ENCODE measurements at regions of chr6 and their contacts with region 1.

Region 1: DNA sequence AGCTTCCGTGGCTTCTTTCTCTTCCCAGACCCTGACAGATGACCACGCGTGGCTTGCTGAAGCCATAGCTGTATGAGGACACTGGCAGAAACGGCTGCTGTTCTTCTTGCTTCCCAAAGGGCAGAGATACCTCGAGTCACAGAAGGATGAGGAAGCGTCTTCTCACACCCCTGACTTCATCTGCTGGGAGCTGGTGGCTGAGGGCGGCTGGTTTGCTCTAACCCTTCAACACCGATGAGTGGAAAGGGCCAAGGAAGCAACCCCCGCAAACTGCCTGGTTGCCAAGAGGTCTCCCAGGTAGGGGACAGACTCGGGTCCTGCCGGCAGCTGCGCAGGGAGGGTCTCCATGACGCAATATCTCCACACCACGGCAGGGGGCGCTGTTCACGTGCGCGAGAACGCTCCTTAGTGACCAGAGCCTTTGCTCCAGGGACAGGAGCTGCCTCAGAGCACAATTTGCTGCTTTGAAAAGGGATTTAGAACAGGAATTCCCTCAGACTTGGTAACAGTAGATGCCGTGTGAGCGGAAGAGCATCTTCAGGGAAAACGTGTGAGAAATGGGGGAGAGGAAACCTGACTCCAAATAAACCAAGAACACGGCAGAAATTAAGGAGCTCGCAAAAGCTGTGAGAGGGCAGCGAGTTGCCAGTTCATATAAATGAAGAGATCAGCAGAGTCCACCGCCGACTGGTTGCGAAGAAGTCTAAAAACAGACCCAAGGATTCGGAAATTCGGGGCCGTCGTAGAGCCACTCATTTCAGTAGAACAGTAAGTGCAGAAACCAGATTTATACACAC is 80.2 kb downstream of the ERMARD start:
- DNase-seq: peak; percentile 88
- H3K4me3 ChIP-seq: peak overlapping the region in 1 of 2 experiments; percentile 29; a peak in 1 of 4 replicates
- H3K27ac ChIP-seq: no peak overlapping the region
- H3K4me1 ChIP-seq: peaks cover 2 to 3% of the 10 kb centered on the region in 2 experiments; a peak in 2 of 4 replicates
- H3K27me3 ChIP-seq: no peaks in the 10 kb centered on the region; the same call in 1 of the 2 replicates
- CTCF ChIP-seq: peak; percentile 84
- EP300 ChIP-seq: no peak
- RAD21 ChIP-seq: peak; percentile 92

Region 2: GRCh38 chr6:169800668-169801395 is 30.8 kb before region 1 on chr6:
- CTCF ChIA-PET with region 1: interaction called, 14 read pairs
- POLR2A ChIA-PET with region 1: no interaction called
- DNase-seq: no peak
- H3K4me3 ChIP-seq: no peak overlapping the region
- H3K27ac ChIP-seq: no peak overlapping the region
- H3K4me1 ChIP-seq: no peaks in the 10 kb centered on the region; a peak in 1 of 4 replicates
- H3K27me3 ChIP-seq: 0 out of 2 replicates have a peak, but pooled peaks cover 6% of the 10 kb centered on the region
- CTCF ChIP-seq: no peak
- EP300 ChIP-seq: no peak
- RAD21 ChIP-seq: no peak

Region 3: DNA sequence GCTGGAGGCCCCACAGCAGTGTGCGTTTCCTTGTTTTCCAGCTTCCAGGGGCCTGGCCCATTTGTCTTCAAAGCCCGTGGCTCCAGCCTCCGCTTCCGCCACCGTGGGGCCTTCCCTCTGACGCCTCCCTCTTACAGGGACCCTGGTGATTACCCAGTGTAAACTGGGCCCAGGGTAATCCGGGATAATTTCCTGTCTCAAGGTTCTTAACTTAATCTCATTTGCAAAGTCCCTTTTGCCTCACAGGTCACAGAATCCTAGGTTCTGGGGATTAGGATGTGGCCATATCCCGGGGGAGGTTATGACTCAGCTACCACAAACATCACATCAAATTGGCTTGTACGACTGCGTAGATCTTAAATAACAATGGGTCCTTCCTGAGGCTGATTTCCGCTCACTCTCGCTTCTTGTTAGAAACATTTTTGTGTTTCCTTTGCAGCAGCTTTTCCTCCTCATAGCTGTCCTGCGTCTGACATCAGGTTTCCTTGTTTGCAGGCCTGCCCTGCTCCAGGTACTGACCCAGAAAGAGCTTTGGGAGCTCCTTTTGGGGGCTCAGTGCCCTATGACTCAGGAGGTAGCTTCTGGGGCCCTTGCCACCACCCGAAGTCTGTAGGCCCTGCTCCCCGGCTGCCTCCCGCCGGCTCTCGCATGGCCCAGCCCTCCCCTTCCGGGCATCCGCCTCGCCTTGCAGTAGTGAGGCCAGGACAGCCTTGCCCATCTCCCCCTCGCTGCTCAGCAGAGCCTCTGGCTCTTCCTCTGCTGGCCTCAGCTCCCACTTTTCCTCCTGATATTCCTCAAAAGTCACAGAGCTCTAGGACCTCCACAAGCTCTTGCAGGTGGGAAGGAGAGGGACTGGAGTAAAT is 20.2 kb after region 1 on chr6:
- CTCF ChIA-PET with region 1: interaction called, 21 read pairs
- POLR2A ChIA-PET with region 1: no interaction called
- DNase-seq: no peak
- H3K4me3 ChIP-seq: no peak overlapping the region
- H3K27ac ChIP-seq: no peak overlapping the region
- H3K4me1 ChIP-seq: no peaks in the 10 kb centered on the region
- H3K27me3 ChIP-seq: no peaks in the 10 kb centered on the region
- CTCF ChIP-seq: no peak
- EP300 ChIP-seq: no peak
- RAD21 ChIP-seq: no peak

Region 4: DNA sequence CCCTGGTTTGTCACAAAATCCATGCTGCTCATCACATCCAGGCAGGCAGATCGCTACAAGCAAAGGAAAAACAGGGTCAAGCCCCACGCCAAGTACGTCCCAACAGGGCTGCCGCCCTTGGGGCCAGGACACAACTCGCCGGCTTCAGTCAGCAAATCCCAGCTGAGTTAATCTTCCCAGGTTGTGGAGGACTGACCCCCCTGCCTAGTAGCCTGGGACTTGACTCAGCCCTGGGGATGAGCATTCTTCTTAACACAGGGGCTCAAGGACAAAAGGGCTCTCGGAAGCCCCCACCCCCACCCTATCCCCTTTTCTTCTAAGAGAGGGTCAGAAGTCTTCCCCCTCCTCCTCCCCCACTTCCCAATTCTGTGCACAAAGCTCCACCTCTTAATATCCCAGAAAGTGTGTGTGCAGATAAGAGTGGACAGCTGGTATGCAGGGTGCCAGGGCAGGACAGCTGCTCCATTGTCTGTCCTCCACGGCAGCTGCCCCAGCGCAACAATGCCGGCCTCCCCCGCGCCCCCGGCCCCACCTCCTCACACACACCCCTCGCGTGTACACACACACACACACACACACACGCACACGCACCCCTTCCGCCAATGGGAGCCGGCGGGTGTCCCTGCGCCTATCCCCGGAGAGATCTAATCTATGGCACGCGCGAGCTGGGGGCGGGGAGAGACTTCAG is 454.7 kb after region 1 on chr6:
- CTCF ChIA-PET with region 1: interaction called, 60 read pairs
- POLR2A ChIA-PET with region 1: no interaction called
- DNase-seq: peak; percentile 70
- H3K4me3 ChIP-seq: no peak overlapping the region
- H3K27ac ChIP-seq: no peak overlapping the region
- H3K4me1 ChIP-seq: peaks cover 0 to 27% of the 10 kb centered on the region in 2 experiments; a peak in 2 of 4 replicates
- H3K27me3 ChIP-seq: peaks cover 44% of the 10 kb centered on the region
- CTCF ChIP-seq: no peak
- EP300 ChIP-seq: no peak
- RAD21 ChIP-seq: no peak

Region 5: DNA sequence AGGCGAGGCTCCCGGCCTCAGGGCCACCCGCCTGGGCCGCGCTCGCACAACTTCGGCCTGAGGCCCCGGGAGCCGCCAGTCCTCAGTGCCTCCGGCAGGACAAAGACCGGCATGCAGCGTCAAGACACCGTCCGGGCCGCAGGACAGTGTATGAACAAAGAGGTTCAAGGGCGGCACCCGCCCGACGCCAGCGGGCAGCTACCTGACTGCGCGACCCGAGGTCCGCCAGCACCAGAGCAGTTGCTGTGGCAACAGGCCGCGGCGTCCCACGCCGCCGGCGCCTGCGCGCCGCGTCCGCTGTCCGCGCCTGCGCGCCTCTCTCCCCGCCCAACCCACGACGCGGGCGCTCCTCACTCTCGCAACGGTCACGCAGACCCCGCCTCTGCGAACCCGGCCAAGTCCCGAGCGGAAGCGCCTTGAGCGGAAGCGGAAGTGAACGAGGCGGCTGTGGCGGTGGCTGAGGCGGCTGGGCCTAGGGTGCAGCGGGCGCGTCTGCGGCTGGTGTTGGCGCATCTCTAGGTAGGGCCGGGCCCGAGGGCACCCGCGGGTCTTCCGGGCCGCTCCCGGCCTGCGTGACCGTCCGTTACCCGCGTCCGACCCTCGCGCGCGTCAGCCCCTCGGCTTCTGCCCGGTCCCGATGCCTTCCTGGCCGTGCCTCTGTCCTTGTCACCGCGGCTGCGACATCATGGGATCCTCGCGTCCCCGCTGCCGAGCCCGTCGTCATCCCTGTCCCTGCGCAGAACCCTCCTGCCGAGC is 474.9 kb after region 1 on chr6 and contains the start of gene FAM120B:
- CTCF ChIA-PET with region 1: interaction called, 15 read pairs
- POLR2A ChIA-PET with region 1: no interaction called
- DNase-seq: peak; percentile 99
- H3K4me3 ChIP-seq: peak within 1 kb of the TSS; percentile 94 to 100
- H3K27ac ChIP-seq: peak within 1 kb of the TSS; percentile 71 to 84
- H3K4me1 ChIP-seq: peaks cover 11 to 30% of the 10 kb centered on the region in 2 experiments; a peak in 3 of 4 replicates
- H3K27me3 ChIP-seq: no peaks in the 10 kb centered on the region
- CTCF ChIP-seq: no peak
- EP300 ChIP-seq: no peak
- RAD21 ChIP-seq: no peak
- polyA plus RNA-seq, gene FAM120B: 7.7 and 9.6 TPM in 2 replicates

Region 6: DNA sequence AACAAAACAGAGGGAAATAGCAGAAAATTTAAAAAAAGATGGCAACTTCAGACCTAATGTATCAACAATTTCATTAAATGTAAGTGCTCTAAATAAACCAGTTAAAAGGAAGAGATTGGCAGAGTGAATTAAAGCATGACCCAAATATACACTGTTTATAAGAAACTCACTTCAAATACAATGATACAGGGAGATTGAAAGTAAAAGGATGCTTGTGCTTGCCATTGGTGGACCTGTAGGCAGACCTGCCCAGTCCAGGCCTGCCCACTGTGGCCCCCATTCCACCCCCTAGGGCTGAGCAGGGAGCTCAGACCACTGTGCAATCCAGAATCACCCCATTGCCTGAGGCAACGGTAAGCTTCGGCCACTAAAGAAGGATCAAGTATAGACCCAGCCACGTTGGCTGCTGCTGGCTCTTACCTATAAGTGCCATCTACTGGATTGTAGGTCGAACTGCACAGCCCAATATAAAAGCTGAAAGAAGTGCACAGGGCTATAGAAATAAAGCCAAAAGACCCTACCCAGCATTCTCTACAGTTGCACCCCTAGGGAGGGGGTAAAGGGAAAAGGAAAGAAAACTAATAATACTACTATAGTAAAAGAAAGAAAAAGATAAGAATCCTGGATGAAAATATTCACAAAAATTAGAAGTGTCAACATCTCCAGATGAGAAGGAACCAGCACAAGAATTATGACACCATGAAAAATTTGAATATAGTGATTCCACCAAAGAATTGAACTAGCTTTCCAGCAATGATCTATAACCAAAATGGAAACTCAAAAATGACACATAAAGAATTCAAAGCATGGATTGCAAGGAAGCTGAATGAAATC is 685.4 kb after region 1 on chr6:
- CTCF ChIA-PET with region 1: interaction called, 59 read pairs
- POLR2A ChIA-PET with region 1: no interaction called
- DNase-seq: peak; percentile 60
- H3K4me3 ChIP-seq: no peak overlapping the region; a peak in 1 of 4 replicates
- H3K27ac ChIP-seq: no peak overlapping the region
- H3K4me1 ChIP-seq: no peaks in the 10 kb centered on the region
- H3K27me3 ChIP-seq: no peaks in the 10 kb centered on the region
- CTCF ChIP-seq: peak; percentile 81
- EP300 ChIP-seq: no peak
- RAD21 ChIP-seq: peak; percentile 87

Region 7: DNA sequence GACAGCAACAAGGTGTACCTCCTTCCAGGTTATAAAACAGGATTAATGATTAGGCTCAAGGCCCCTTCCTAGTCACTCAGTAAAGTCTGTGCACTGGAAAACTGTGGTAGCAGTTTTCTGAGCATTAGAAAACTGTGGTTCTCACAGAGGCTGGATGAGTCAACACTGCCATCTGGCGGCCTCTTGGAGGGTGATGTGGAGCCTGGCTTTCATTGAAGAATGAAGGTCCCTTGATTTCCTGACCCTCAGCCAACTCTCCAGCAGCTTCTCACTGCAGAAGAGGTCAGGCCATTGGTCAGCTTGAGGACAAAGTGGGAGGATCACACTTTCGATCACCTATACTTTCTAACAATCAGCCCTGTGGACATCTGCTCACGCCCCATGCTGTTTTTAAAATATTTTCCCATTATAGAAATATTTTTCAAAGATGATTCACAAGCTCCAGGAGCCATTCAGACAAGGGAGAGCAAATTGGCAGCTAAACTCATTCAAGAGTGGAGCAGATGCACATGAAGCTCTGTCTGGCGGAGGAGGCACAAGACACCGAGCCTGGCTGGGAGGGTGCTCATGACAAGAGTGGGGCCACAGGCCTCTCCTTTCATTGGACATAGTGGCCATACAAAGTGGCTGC is 698.3 kb after region 1 on chr6:
- CTCF ChIA-PET with region 1: interaction called, 110 read pairs
- POLR2A ChIA-PET with region 1: no interaction called
- DNase-seq: peak; percentile 70
- H3K4me3 ChIP-seq: no peak overlapping the region; a peak in 1 of 4 replicates
- H3K27ac ChIP-seq: peak overlapping the region in 1 of 2 experiments; percentile 28; a peak in 2 of 4 replicates
- H3K4me1 ChIP-seq: peaks cover 0 to 2% of the 10 kb centered on the region in 2 experiments; a peak in 1 of 4 replicates
- H3K27me3 ChIP-seq: no peaks in the 10 kb centered on the region
- CTCF ChIP-seq: peak; percentile 95
- EP300 ChIP-seq: no peak
- RAD21 ChIP-seq: peak; percentile 98